ENCODE measurements at regions of chr20 and their contacts with region 1.

Region 1: DNA sequence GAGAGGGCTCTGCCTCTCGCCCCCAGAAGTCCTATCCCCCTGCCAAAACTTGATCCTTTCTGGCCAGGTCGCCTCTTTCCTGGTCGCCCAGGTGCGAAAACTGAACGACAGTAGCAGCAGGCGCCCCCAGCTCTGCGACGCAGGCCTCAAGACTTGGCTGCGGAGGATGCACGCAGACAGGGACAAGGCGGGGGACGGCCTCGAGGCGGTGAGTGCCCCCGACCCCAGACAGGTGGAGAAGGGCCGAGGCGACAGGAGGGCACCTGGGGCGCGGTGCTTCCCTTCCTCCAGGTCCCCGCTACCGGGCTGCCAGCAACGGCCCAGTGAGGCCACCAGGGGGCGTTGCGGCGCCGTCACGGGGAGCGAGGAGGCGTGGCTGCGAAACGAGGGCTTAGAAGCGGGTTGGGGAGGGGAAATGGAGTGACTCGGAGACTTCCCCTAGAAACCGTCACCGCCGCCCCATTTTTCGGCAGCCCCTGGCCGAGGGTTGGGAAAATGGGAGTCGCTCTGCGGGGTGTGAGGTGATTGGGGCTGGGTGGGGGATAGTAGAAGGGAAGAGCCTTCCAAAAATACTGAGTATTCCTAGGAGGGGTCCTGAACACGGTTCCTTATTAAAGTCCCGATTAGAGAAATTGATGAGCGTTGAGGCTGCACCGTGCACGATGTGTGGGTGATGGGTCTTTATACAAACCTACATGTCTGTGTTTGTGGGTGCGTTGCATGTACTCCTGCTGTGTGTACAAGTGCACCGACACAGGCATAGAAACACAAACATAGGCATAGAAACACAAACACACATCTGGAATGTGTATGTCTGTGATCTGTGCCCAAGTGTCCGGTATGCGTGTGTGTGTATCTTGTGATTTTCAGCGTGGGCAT is 44.6 kb downstream of the ARHGAP40 start:
- DNase-seq: peak; percentile 36 to 98
- H3K4me3 ChIP-seq: peak overlapping the region in 3 of 4 experiments; percentile 30 to 48 (median 44); a peak in 6 of 8 replicates
- H3K27ac ChIP-seq: no peak overlapping the region
- H3K4me1 ChIP-seq: peaks cover 0 to 5% (median 3%) of the 10 kb centered on the region in 4 experiments; a peak in 5 of 7 replicates
- H3K27me3 ChIP-seq: peaks cover 8 to 43% (median 31%) of the 10 kb centered on the region in 4 experiments
- CTCF ChIP-seq: peak; percentile 95 to 97 (median 95)
- EP300 ChIP-seq: no peak
- POLR2A ChIP-seq: no peak
- RAD21 ChIP-seq: peak; percentile 92 to 95

Region 2: DNA sequence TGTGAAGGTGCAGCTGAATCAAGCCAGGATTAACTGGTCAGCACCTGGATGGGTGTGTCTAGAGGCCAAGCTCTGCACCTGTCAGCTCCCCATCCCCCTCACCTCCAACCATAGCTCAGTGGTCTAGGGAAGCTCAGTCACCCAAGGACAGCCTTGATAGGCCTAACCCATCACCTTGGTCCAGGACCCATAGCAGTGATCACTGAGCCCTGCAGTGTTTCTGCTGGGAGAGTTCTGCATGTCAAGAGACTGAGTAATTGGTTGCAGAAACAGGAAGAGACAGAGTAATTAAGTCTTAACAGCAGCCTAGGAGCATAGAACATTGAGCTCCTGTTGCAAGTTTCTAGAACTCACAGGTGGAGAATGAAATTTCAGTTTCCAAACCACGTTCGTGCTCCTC is 192.3 kb before region 1 on chr20:
- CTCF ChIA-PET with region 1: no interaction called
- POLR2A ChIA-PET with region 1: no interaction called
- DNase-seq: no peak
- H3K4me3 ChIP-seq: no peak overlapping the region
- H3K27ac ChIP-seq: no peak overlapping the region
- H3K4me1 ChIP-seq: no peaks in the 10 kb centered on the region
- H3K27me3 ChIP-seq: no peaks in the 10 kb centered on the region
- CTCF ChIP-seq: no peak
- EP300 ChIP-seq: no peak
- POLR2A ChIP-seq: no peak
- RAD21 ChIP-seq: no peak

Region 3: DNA sequence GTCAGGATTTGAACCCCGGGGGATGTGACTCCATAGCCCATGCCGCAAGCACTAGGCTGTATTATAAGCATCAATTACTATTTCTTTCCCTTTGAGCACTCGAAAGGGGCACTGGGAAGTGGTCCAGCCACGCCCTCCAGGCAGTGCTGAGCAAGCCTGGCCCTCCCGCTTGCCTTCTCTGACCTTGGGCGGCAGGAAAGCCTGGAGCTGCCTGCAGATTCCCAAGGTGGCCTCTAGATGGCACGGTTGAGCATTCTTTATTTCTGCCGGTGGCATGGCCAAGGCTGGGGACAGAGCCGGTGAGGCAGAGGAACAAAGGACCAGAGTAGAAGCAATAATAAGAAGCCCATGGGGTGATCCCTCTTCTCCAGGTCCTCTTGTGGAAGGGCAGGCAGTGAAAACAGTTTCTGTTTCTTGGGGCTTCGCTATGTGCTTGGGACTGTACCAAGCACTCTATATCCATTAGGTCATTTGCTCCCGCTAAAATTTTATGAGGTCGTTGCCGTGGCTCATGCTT is 12.6 kb before region 1 on chr20:
- CTCF ChIA-PET with region 1: interaction called, 30 read pairs
- POLR2A ChIA-PET with region 1: no interaction called
- DNase-seq: peak; percentile 51 to 91
- H3K4me3 ChIP-seq: no peak overlapping the region
- H3K27ac ChIP-seq: no peak overlapping the region
- H3K4me1 ChIP-seq: peaks cover 0 to 6% (median 2%) of the 10 kb centered on the region in 4 experiments; a peak in 3 of 7 replicates
- H3K27me3 ChIP-seq: peaks cover 0 to 2% (median 0%) of the 10 kb centered on the region in 4 experiments; a peak in 1 of 7 replicates
- CTCF ChIP-seq: peak; percentile 75 to 97 (median 86)
- EP300 ChIP-seq: no peak
- POLR2A ChIP-seq: no peak
- RAD21 ChIP-seq: peak; percentile 54 to 74

Region 4: DNA sequence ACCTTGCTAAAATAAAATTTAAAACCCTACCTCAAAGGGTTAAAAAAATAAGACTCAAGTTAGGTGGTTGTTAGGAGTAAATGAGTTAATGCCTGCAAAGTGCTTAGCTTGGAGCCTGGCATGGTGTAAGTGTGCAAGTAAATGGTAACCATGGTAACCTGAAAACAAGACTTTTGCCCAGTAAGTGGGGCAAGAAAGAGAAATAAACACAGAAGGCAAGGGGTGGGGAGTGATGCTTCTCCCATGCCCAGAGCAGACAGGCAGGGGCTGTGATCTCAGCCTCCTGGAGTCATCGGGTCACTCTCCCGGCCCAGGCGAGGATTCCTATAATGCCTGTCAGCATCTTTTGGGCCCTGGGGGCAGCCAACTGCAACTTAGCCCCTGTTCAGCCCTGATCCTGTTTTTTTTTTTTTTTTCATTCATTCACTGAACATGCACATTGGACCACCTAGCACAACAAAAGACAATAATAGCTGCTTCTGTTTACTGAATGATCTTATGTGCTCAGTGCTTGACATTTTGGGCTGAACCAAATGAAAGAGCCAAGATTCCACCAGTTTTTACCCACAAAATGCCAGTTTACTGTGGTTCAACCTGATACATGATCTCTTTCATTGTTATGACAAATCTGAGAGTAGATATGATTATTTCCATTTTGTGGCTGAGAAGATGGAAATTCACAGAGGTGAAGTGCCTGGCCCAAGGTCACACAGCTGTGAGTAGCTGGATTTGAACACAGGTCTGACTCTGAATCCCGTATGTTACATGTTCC is 19.1 kb after region 1 on chr20:
- CTCF ChIA-PET with region 1: interaction called, 73 read pairs
- POLR2A ChIA-PET with region 1: no interaction called
- DNase-seq: no peak
- H3K4me3 ChIP-seq: no peak overlapping the region
- H3K27ac ChIP-seq: no peak overlapping the region
- H3K4me1 ChIP-seq: peaks cover 0 to 5% (median 2%) of the 10 kb centered on the region in 4 experiments; a peak in 3 of 7 replicates
- H3K27me3 ChIP-seq: no peaks in the 10 kb centered on the region; a peak in 1 of 7 replicates
- CTCF ChIP-seq: no peak
- EP300 ChIP-seq: no peak
- POLR2A ChIP-seq: no peak
- RAD21 ChIP-seq: no peak

Region 5: GRCh38 chr20:38674092-38674764 is 28.0 kb after region 1 on chr20:
- CTCF ChIA-PET with region 1: interaction called, 29 read pairs
- POLR2A ChIA-PET with region 1: interaction called, 3 read pairs
- DNase-seq: peak; percentile 71 to 91
- H3K4me3 ChIP-seq: peak overlapping the region; percentile 60 to 86 (median 69)
- H3K27ac ChIP-seq: no peak overlapping the region
- H3K4me1 ChIP-seq: peaks cover 2 to 17% (median 10%) of the 10 kb centered on the region in 4 experiments; a peak in 5 of 7 replicates
- H3K27me3 ChIP-seq: peaks cover 3 to 38% (median 18%) of the 10 kb centered on the region in 4 experiments
- CTCF ChIP-seq: no peak
- EP300 ChIP-seq: no peak
- POLR2A ChIP-seq: peak in 1 of 2 experiments; percentile 42; a peak in 1 of 3 replicates
- RAD21 ChIP-seq: no peak

Region 6: DNA sequence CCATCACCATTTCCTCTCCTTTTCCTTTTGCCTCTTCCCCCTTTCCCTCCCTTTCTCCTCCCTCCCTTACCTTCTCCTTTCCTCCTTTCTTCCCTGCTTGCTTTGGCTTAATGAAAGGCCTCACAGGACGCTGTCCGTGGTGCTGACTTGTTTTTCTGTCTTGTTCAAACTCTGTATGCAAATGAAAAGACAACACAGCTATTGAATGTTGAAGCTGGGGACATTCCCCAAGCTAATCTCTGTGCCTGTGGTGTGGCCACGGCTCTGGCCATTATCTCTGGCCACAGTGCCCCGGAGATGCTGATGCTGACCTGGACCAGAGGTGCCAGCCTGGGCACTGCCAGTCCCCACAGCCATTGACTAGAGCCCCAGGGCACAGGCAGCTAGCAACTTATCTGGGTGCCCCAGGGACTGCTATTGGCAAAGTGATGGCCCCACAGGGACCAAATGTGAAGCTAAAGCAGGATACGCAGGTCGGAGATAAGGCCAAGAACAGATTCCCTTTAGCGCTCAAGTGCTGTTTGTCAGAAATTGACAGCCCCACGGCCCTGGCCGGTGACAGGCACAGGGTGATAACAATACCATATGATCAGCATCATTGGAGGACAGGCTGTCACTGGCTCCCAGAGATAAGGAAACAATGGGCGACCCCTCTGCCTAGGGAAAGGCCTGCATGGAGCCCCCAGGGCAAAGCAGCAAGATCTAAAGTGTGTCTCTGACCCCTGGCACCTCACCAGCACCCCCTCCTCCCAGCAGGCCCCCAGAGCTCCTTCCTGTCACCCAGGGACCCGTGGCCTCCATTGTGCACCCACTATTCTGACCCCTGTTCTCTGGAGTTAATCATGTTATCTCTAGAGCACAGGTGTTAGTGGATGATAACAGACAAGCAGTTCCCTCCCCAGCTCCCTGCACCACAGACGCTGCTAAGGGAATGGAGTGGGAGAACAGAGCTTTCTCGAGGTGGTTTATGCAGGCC is 46.5 kb after region 1 on chr20:
- CTCF ChIA-PET with region 1: interaction called, 32 read pairs
- POLR2A ChIA-PET with region 1: no interaction called
- DNase-seq: peak in 1 of 2 experiments; percentile 90
- H3K4me3 ChIP-seq: no peak overlapping the region
- H3K27ac ChIP-seq: no peak overlapping the region
- H3K4me1 ChIP-seq: peaks cover 0 to 3% (median 1%) of the 10 kb centered on the region in 4 experiments; a peak in 3 of 7 replicates
- H3K27me3 ChIP-seq: peaks cover 0 to 7% (median 0%) of the 10 kb centered on the region in 4 experiments; a peak in 3 of 7 replicates
- CTCF ChIP-seq: no peak
- EP300 ChIP-seq: no peak
- POLR2A ChIP-seq: no peak
- RAD21 ChIP-seq: 0 out of 4 replicates have a peak, but pooled peaks of 1 of the 2 experiments have one; percentile 9

Region 7: DNA sequence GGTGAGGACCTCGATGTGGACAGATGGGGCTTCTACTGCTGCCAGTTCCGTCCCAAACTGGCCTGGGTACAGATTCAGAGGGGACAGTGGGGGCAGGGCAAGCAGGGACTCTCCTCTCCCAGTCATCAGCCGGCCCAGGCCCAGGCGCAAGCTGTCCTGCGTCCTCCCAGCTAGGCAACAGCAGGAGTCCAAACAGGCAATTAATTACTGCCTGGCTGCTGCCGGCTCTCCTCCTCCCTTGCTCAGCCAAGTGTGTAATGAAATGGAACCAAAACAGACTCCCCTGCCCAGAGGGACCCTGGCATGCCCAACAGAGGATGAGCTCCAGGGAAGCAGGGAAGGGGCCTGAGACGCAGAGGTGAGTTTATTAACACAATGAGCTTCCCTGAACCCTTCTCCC is 60.3 kb after region 1 on chr20:
- CTCF ChIA-PET with region 1: interaction called, 10 read pairs
- POLR2A ChIA-PET with region 1: no interaction called
- DNase-seq: no peak
- H3K4me3 ChIP-seq: no peak overlapping the region
- H3K27ac ChIP-seq: no peak overlapping the region
- H3K4me1 ChIP-seq: peaks cover 0 to 7% (median 3%) of the 10 kb centered on the region in 4 experiments; a peak in 4 of 7 replicates
- H3K27me3 ChIP-seq: no peaks in the 10 kb centered on the region; a peak in 1 of 7 replicates
- CTCF ChIP-seq: no peak
- EP300 ChIP-seq: no peak
- POLR2A ChIP-seq: no peak
- RAD21 ChIP-seq: no peak

Region 8: GRCh38 chr20:38714308-38714707 is 68.1 kb after region 1 on chr20:
- CTCF ChIA-PET with region 1: interaction called, 28 read pairs
- POLR2A ChIA-PET with region 1: no interaction called
- DNase-seq: no peak
- H3K4me3 ChIP-seq: no peak overlapping the region
- H3K27ac ChIP-seq: no peak overlapping the region
- H3K4me1 ChIP-seq: peaks cover 0 to 3% (median 0%) of the 10 kb centered on the region in 4 experiments; a peak in 1 of 7 replicates
- H3K27me3 ChIP-seq: peaks cover 2 to 13% (median 7%) of the 10 kb centered on the region in 4 experiments; a peak in 5 of 7 replicates
- CTCF ChIP-seq: no peak
- EP300 ChIP-seq: no peak
- POLR2A ChIP-seq: no peak
- RAD21 ChIP-seq: no peak